IMR-90 (cell line): ENCODE measurements at regions of chr5 and their contacts with region 1.

Region 1: GRCh38 chr5:16916262-16916865 is 19.7 kb downstream of the MYO10 start:
- DNase-seq: peak; percentile 93
- ATAC-seq: peak; percentile 59
- H3K4me3 ChIP-seq: no peak overlapping the region
- H3K27ac ChIP-seq: no peak overlapping the region
- H3K4me1 ChIP-seq: peaks cover 32% of the 10 kb centered on the region
- H3K27me3 ChIP-seq: no peaks in the 10 kb centered on the region
- CTCF ChIP-seq: no peak
- POLR2A ChIP-seq: no peak
- RAD21 ChIP-seq: no peak

Region 2: GRCh38 chr5:16626663-16627264 is 289.6 kb before region 1 on chr5:
- CTCF ChIA-PET with region 1: no interaction called
- POLR2A ChIA-PET with region 1: no interaction called
- dilution Hi-C with region 1: no loop called
- in situ Hi-C with region 1: no loop called
- intact Hi-C with region 1: no loop called
- DNase-seq: no peak
- ATAC-seq: no peak
- H3K4me3 ChIP-seq: no peak overlapping the region
- H3K27ac ChIP-seq: no peak overlapping the region
- H3K4me1 ChIP-seq: no peaks in the 10 kb centered on the region
- H3K27me3 ChIP-seq: peaks cover 27% of the 10 kb centered on the region
- CTCF ChIP-seq: no peak
- POLR2A ChIP-seq: no peak
- RAD21 ChIP-seq: no peak

Region 3: GRCh38 chr5:16970826-16971225 is 54.5 kb after region 1 on chr5:
- CTCF ChIA-PET with region 1: no interaction called
- POLR2A ChIA-PET with region 1: interaction called, 10 read pairs
- dilution Hi-C with region 1: no loop called
- in situ Hi-C with region 1: no loop called
- intact Hi-C with region 1: no loop called
- DNase-seq: peak; percentile 60
- ATAC-seq: peak; percentile 60; the same call in 1 of the 2 replicates
- H3K4me3 ChIP-seq: no peak overlapping the region
- H3K27ac ChIP-seq: no peak overlapping the region
- H3K4me1 ChIP-seq: no peaks in the 10 kb centered on the region
- H3K27me3 ChIP-seq: no peaks in the 10 kb centered on the region
- CTCF ChIP-seq: no peak
- POLR2A ChIP-seq: no peak
- RAD21 ChIP-seq: no peak